Activated B cell treated with CpG ODN at 0.5 μM for 24 hours (primary cell): ENCODE measurements at regions of chr14 and their contacts with region 1.

Region 1: GRCh38 chr14:49971156-49972130 is 78.6 kb downstream of the ARF6 start:
- DNase-seq: no peak
- ATAC-seq: peak; percentile 90
- H3K4me3 Mint-ChIP-seq: peak overlapping the region; percentile 44
- H3K27ac Mint-ChIP-seq: peak overlapping the region; percentile 96
- H3K4me1 Mint-ChIP-seq: peaks cover 70% of the 10 kb centered on the region
- H3K27me3 Mint-ChIP-seq: no peaks in the 10 kb centered on the region
- CTCF ChIP-seq: no peak

Region 2: DNA sequence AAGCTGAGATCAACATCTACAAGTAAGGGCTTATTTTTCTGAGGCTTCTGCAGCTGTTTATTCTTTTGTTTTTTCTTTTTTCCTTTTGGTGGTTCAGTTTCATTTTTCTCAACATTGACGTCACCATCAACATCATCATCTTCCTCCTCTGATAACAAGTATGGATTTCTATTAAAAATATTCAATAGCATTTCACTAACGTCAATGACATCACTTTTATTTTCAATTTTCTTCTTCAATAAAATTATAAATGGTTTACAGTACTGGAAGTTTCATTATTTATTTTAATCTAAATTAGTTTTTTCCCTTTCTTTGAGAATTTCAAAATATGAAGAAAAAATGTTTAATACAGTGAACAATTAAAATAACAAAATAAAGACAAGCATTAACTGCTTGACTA is 142.8 kb before region 1 on chr14:
- CTCF ChIA-PET with region 1: no interaction called
- POLR2A ChIA-PET with region 1: no interaction called
- intact Hi-C with region 1: no loop called
- DNase-seq: no peak
- ATAC-seq: no peak
- H3K4me3 Mint-ChIP-seq: no peak overlapping the region
- H3K27ac Mint-ChIP-seq: no peak overlapping the region
- H3K4me1 Mint-ChIP-seq: peaks cover 6% of the 10 kb centered on the region
- H3K27me3 Mint-ChIP-seq: no peaks in the 10 kb centered on the region
- CTCF ChIP-seq: no peak

Region 3: GRCh38 chr14:49892636-49893308 is 78.7 kb before region 1 on chr14 and contains the start of gene ARF6:
- CTCF ChIA-PET with region 1: interaction called, 12 read pairs
- POLR2A ChIA-PET with region 1: interaction called, 69 read pairs
- intact Hi-C with region 1: loop called (anchors 1 kb)
- DNase-seq: peak; percentile 98
- ATAC-seq: peak; percentile 85
- H3K4me3 Mint-ChIP-seq: peak within 1 kb of the TSS; percentile 96
- H3K27ac Mint-ChIP-seq: peak within 1 kb of the TSS; percentile 98
- H3K4me1 Mint-ChIP-seq: peaks cover 38% of the 10 kb centered on the region
- H3K27me3 Mint-ChIP-seq: no peaks in the 10 kb centered on the region
- CTCF ChIP-seq: no peak
- total RNA-seq, gene ARF6: 136 and 142 TPM in 2 replicates

Region 4: DNA sequence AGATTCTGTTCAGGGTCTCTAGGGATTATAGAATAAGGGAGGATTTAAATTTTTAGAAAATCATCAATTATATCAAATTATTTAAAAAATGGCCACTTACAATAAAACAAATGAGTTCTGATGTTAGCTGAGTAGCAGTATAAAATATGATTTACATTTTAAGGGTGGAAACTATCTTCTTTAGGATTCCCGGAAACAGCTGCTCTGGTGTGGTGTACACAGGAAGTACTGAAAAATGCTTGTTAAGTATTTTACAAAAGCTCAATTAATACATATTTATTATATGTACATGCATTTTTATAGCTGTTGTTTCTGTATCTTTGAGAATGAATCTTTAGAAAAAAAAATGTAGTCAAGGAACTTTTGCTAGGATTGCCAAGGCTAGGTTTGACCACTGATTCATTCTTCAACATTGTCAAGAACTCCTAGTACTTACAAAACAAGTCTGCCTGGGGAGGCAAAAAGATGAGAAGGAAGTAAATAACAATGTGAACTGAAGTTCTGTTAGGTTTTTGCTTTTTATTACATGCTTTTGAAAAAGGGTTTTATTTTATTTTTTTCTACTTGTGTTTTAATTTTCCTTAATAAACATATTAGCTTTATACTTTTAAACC is 30.5 kb before region 1 on chr14:
- CTCF ChIA-PET with region 1: interaction called, 4 read pairs
- POLR2A ChIA-PET with region 1: interaction called, 18 read pairs
- intact Hi-C with region 1: no loop called
- DNase-seq: no peak
- ATAC-seq: peak; percentile 42
- H3K4me3 Mint-ChIP-seq: peak overlapping the region; percentile 7
- H3K27ac Mint-ChIP-seq: peak overlapping the region; percentile 61
- H3K4me1 Mint-ChIP-seq: peaks cover 42% of the 10 kb centered on the region
- H3K27me3 Mint-ChIP-seq: no peaks in the 10 kb centered on the region
- CTCF ChIP-seq: no peak

Region 5: DNA sequence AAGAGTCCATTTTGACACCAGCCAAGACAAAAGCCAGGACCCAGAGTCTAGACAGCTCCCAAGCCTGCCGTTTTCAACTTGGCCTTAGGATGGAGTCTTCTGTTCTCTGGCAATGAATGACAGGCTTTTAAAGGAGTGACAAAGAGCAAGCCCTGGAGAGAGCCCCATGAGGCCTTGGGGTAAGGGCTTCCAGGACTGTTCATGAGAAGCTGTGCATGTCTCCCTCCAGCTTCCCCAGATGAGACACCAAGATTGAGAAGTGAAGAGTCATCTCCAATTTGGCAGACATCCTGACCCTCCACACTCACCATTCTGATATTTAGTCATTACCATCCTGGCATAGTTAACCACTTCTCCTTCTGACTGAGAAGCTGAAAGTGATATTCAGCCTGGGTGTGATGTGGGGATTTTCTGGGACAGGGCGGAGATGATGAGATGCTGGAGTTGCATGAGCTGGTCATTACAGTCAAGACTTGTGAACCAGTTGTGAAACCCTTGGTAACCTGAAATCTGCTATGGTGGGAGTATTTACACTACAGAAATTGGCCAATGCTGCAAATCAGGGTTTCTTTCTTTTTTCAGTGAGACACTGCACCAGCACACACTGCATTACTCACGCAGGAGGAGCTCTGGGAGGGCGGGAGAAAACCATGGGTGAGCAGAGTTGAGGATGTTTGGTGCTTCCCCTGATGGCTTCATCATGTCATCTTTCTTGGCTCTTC is 67.1 kb after region 1 on chr14:
- CTCF ChIA-PET with region 1: interaction called, 3 read pairs
- POLR2A ChIA-PET with region 1: interaction called, 22 read pairs
- intact Hi-C with region 1: loop called (anchors 1 kb)
- DNase-seq: no peak
- ATAC-seq: peak; percentile 78
- H3K4me3 Mint-ChIP-seq: peak overlapping the region; percentile 52
- H3K27ac Mint-ChIP-seq: peak overlapping the region; percentile 93
- H3K4me1 Mint-ChIP-seq: peaks cover 45% of the 10 kb centered on the region
- H3K27me3 Mint-ChIP-seq: no peaks in the 10 kb centered on the region
- CTCF ChIP-seq: no peak

Region 6: DNA sequence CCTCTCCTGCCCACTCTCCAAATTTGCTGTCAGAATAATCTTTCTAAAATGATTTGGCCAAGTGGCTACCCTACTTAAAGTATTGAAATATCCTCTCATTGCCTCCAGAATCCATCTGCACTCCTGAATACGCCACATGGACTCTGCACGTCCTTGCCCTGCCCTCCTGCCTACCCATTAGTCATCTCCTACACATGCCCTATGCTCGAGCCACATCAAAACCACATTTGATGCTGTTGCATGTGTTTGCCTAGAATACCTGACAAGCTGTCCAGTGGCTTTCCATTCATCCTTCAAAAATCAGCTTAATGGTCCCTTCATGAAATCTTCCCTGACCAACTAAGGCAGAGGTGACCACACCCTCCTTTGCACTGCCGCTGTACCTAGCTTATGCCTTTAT is 127.9 kb after region 1 on chr14:
- CTCF ChIA-PET with region 1: no interaction called
- POLR2A ChIA-PET with region 1: interaction called, 11 read pairs
- intact Hi-C with region 1: no loop called
- DNase-seq: no peak
- ATAC-seq: no peak
- H3K4me3 Mint-ChIP-seq: no peak overlapping the region
- H3K27ac Mint-ChIP-seq: peak overlapping the region; percentile 62
- H3K4me1 Mint-ChIP-seq: peaks cover 74% of the 10 kb centered on the region
- H3K27me3 Mint-ChIP-seq: no peaks in the 10 kb centered on the region
- CTCF ChIP-seq: no peak

Region 7: GRCh38 chr14:50198499-50198898 is 227.1 kb after region 1 on chr14:
- CTCF ChIA-PET with region 1: no interaction called
- POLR2A ChIA-PET with region 1: no interaction called
- intact Hi-C with region 1: no loop called
- DNase-seq: no peak
- ATAC-seq: no peak
- H3K4me3 Mint-ChIP-seq: no peak overlapping the region
- H3K27ac Mint-ChIP-seq: no peak overlapping the region
- H3K4me1 Mint-ChIP-seq: no peaks in the 10 kb centered on the region
- H3K27me3 Mint-ChIP-seq: no peaks in the 10 kb centered on the region
- CTCF ChIP-seq: no peak